ENCODE measurements at regions of chr6 and their contacts with region 1.

Region 1: GRCh38 chr6:145028144-145028818 is 707.0 kb downstream of the EPM2A start:
- DNase-seq: peak; percentile 48
- ATAC-seq: peak; percentile 93
- H3K4me3 ChIP-seq: no peak overlapping the region
- H3K27ac ChIP-seq: no peak overlapping the region
- H3K4me1 ChIP-seq: no peaks in the 10 kb centered on the region
- H3K27me3 ChIP-seq: no peaks in the 10 kb centered on the region
- CTCF ChIP-seq: peak; percentile 68; the same call in 1 of the 2 replicates

Region 2: DNA sequence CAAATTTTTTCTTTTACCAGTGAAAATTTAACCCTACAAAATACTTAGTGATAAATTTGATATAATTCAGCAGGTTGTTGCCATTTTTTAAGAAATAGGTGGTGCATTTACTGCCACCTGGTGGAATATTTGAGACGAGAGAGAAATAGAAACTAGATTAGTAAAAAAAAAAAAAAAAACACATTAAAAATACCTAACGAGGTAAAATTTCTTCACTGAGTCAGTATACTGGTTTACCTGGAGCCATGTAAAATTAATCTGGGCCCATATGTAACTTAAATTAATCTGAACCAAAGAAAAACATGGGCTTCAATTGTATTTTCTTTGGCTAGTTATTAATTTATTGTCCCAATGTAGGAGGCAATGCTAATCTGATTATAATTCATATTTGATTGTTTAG is 186.3 kb after region 1 on chr6:
- CTCF ChIA-PET with region 1: no interaction called
- POLR2A ChIA-PET with region 1: no interaction called
- in situ Hi-C with region 1: no loop called
- intact Hi-C with region 1: loop called (anchors 10 kb)
- DNase-seq: peak; percentile 15
- ATAC-seq: no peak
- H3K4me3 ChIP-seq: no peak overlapping the region
- H3K27ac ChIP-seq: no peak overlapping the region
- H3K4me1 ChIP-seq: no peaks in the 10 kb centered on the region
- H3K27me3 ChIP-seq: no peaks in the 10 kb centered on the region
- CTCF ChIP-seq: peak; percentile 71; the same call in 1 of the 2 replicates

Measured in Panc1 (cell line).